HCT116 (cell line): ENCODE measurements at regions of chr1 and their contacts with region 1.

Region 1: DNA sequence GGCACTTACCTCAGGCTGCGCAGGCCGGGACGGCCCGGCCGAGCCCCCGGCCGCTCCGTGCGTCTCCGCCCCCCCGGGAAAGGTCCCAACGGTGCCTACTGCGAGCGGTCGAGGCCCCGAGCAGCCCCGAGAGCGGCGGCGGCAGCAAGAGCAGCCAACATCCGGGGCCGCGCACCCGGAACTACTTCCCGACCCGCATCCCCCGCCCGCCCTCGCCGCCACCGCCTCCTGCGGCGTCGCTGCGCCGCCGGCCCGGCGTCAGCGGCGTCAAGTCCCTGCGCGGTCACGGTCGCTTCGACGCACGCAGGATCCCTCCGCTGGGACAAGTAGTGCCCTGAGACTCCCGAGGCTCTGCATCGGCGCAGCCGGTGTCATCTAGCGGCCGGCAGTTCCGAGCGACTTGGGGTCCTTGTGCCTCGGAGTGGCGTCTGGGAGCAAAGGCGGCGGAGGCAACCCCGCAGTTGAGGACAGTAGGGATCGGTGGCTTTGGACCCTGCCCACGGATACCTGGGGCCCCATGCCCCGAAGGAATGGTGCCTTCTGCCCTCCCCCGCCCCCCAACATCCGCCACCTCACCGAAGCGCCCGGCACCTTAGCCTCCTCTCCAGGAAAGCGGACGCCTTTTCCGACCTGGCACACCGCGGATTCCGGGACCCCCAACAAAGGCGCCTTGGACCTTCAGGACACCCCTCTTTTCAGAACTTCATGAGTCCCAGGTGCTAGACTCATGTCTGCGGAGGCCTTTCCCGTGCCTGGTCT is at the start of gene FOXJ3:
- DNase-seq: peak; percentile 96
- ATAC-seq: peak; percentile 84
- H3K4me3 ChIP-seq: peak within 1 kb of the TSS; percentile 64 to 95
- H3K27ac ChIP-seq: peak within 1 kb of the TSS; percentile 85
- H3K4me1 ChIP-seq: peaks cover 0 to 19% of the 10 kb centered on the region in 2 experiments; a peak in 3 of 4 replicates
- H3K27me3 ChIP-seq: no peaks in the 10 kb centered on the region
- CTCF ChIP-seq: no peak
- POLR2A ChIP-seq: peak; percentile 75
- RAD21 ChIP-seq: 0 out of 2 replicates have a peak, but pooled peaks have one; percentile 8
- total RNA-seq, gene FOXJ3: 51.1 TPM

Region 2: GRCh38 chr1:42456010-42456758 is 121.0 kb after region 1 on chr1 and contains the starts of genes PPCS and ZMYND12:
- CTCF ChIA-PET with region 1: no interaction called
- POLR2A ChIA-PET with region 1: no interaction called
- RAD21 ChIA-PET with region 1: no interaction called
- intact Hi-C with region 1: loop called (anchors 5 kb)
- DNase-seq: peak; percentile 75
- ATAC-seq: peak; percentile 92
- H3K4me3 ChIP-seq: peak within 1 kb of the TSS; percentile 88 to 95
- H3K27ac ChIP-seq: peak within 1 kb of the TSS; percentile 93
- H3K4me1 ChIP-seq: peaks cover 0 to 16% of the 10 kb centered on the region in 2 experiments; a peak in 3 of 4 replicates
- H3K27me3 ChIP-seq: no peaks in the 10 kb centered on the region
- CTCF ChIP-seq: no peak
- POLR2A ChIP-seq: peak; percentile 66
- RAD21 ChIP-seq: no peak
- total RNA-seq, gene PPCS: 53.2 TPM
- total RNA-seq, gene ZMYND12: 0.25 TPM

Region 3: DNA sequence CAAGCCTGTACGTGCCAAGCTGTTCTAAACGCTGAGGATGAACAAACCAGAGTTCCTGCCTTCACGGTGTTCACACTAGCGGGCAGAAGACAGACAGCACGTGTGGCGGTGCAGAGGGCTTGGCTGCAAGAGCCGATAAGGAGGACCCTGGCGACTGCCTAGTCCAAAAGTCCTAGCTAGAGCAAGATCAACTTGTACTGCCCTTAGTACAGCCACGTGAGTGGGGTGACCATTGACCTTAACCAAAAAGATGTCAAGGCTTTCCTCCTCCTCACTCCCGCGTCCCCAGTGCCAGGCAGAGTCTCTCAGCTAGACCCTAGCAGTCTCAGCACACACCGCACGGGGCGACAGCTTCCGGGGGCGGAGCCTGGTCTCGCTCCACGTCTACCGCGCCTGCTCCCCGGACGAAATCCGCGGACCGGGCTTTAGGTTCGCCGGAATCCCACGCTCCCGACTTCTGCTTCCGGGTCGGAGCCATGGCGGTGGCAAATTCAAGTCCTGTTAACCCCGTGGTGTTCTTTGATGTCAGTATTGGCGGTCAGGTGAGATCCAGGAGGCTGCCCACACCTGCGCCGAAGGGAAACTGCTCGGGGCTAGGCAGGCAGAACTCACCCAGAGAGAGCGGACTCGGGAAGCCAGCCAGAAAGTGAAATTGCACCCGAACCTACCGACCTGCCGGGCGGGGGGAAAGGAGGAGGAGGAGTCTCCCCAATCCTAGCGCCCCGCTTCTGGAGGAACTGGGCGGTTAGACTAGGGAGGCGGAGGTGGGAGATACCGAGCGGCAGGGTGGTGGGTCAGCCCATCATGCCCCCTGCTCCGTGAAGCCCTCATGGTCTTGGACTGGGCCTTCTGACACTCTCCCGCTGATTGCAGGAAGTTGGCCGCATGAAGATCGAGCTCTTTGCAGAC is 323.0 kb after region 1 on chr1 and contains the start of gene PPIH:
- CTCF ChIA-PET with region 1: no interaction called
- POLR2A ChIA-PET with region 1: no interaction called
- RAD21 ChIA-PET with region 1: no interaction called
- intact Hi-C with region 1: loop called (anchors 10 kb)
- DNase-seq: peak; percentile 88
- ATAC-seq: peak; percentile 99
- H3K4me3 ChIP-seq: peak within 1 kb of the TSS; percentile 89 to 98
- H3K27ac ChIP-seq: peak within 1 kb of the TSS; percentile 70
- H3K4me1 ChIP-seq: peaks cover 11 to 21% of the 10 kb centered on the region in 2 experiments; a peak in 3 of 4 replicates
- H3K27me3 ChIP-seq: no peaks in the 10 kb centered on the region
- CTCF ChIP-seq: no peak
- POLR2A ChIP-seq: peak; percentile 90
- RAD21 ChIP-seq: no peak
- total RNA-seq, gene PPIH: 100 TPM

Region 4: DNA sequence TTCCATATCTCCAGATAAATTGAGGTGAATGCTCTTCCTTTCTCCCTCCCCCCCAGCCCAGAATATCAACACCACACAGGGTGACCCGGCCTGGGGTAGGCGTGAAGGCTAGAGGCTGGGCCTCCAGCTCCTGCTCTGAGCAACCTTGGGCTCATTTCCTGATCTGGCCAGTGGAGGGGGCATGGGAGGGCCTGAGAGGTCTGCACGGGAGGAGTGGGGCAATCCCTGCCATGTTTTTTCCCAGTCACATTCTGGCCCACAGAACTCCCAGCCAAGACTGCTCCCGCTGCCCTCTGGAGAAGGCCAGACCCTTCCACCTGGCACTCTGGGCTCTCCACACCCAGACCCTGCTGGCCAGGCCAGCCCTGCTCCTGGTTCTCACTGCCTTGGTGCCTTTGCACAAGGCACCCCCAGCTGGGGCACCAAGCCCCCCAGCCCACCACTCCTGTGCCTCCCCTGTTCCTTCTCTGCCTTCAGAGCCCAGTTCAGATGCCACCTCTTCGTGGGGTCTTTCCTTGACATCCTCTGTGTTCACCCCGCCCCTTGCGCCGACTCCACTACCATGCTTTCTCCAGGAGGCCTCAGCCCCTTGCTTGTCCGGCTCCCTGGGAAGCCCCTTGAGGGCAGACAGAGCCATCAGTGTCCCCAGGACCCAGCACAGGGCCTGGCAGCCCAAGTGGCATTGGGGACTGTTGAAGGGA is 401.1 kb after region 1 on chr1:
- CTCF ChIA-PET with region 1: no interaction called
- POLR2A ChIA-PET with region 1: no interaction called
- RAD21 ChIA-PET with region 1: no interaction called
- intact Hi-C with region 1: loop called (anchors 10 kb)
- DNase-seq: no peak
- ATAC-seq: peak; percentile 88
- H3K4me3 ChIP-seq: no peak overlapping the region
- H3K27ac ChIP-seq: no peak overlapping the region; the same call in 1 of the 2 replicates
- H3K4me1 ChIP-seq: peaks cover 0 to 6% of the 10 kb centered on the region in 2 experiments; a peak in 3 of 4 replicates
- H3K27me3 ChIP-seq: no peaks in the 10 kb centered on the region
- CTCF ChIP-seq: peak in 2 of 3 experiments; percentile 44 to 64; a peak in 4 of 6 replicates
- POLR2A ChIP-seq: no peak
- RAD21 ChIP-seq: no peak

Region 5: GRCh38 chr1:43522776-43523480 is 1187.7 kb after region 1 on chr1:
- CTCF ChIA-PET with region 1: no interaction called
- POLR2A ChIA-PET with region 1: no interaction called
- RAD21 ChIA-PET with region 1: no interaction called
- intact Hi-C with region 1: no loop called
- DNase-seq: peak; percentile 85
- ATAC-seq: peak; percentile 79
- H3K4me3 ChIP-seq: no peak overlapping the region
- H3K27ac ChIP-seq: no peak overlapping the region
- H3K4me1 ChIP-seq: peaks cover 22 to 59% of the 10 kb centered on the region in 2 experiments
- H3K27me3 ChIP-seq: no peaks in the 10 kb centered on the region
- CTCF ChIP-seq: no peak
- POLR2A ChIP-seq: no peak
- RAD21 ChIP-seq: no peak